PC-9 (cell line): ENCODE measurements at regions of chrX and their contacts with region 1.

Region 1: DNA sequence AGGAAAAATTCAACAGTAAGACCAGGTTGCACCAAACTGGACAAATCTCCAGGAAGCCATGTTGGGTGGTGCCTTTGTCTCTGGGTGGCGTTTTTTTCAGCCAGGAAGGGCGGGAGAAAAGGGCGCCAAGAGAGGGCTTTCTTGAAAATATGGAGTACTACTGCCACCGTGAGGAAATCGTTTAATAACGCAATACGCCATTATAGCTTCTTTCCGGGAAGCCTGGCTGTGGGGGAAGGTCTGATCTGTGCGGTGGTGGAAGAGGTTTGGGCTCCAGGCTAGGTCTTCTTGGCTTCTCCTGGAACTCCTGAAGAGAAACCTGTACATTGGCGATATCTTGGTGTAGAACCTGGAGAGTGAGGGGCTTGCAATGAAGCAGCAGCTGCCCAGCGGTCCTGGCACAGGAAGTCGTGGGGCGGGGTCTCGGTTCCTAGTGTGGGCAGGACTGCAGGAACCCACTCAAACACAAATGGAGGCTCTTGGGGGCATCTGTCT is 202.6 kb downstream of the OR13H1 start:
- DNase-seq: peak in 1 of 2 experiments; percentile 67
- H3K4me3 ChIP-seq: no peak overlapping the region
- H3K27ac ChIP-seq: no peak overlapping the region
- H3K4me1 ChIP-seq: no peaks in the 10 kb centered on the region
- H3K27me3 ChIP-seq: no peaks in the 10 kb centered on the region
- CTCF ChIP-seq: no peak

Region 2: GRCh38 chrX:131493113-131493512 is 253.4 kb before region 1 on chrX:
- CTCF ChIA-PET with region 1: no interaction called
- POLR2A ChIA-PET with region 1: no interaction called
- intact Hi-C with region 1: no loop called
- DNase-seq: no peak
- H3K4me3 ChIP-seq: no peak overlapping the region
- H3K27ac ChIP-seq: no peak overlapping the region
- H3K4me1 ChIP-seq: no peaks in the 10 kb centered on the region
- H3K27me3 ChIP-seq: no peaks in the 10 kb centered on the region
- CTCF ChIP-seq: no peak

Region 3: GRCh38 chrX:131704136-131704695 is 42.3 kb before region 1 on chrX:
- CTCF ChIA-PET with region 1: no interaction called
- POLR2A ChIA-PET with region 1: no interaction called
- intact Hi-C with region 1: loop called (anchors 1 kb)
- DNase-seq: peak; percentile 36 to 72
- H3K4me3 ChIP-seq: peak overlapping the region; percentile 31; the same call in 1 of the 2 replicates
- H3K27ac ChIP-seq: no peak overlapping the region
- H3K4me1 ChIP-seq: no peaks in the 10 kb centered on the region
- H3K27me3 ChIP-seq: no peaks in the 10 kb centered on the region
- CTCF ChIP-seq: peak; percentile 28; the same call in 1 of the 2 replicates

Region 4: GRCh38 chrX:131812836-131813825 is 66.6 kb after region 1 on chrX:
- CTCF ChIA-PET with region 1: no interaction called
- POLR2A ChIA-PET with region 1: no interaction called
- intact Hi-C with region 1: loop called (anchors 1 kb)
- DNase-seq: peak in 1 of 2 experiments; percentile 72
- H3K4me3 ChIP-seq: no peak overlapping the region
- H3K27ac ChIP-seq: no peak overlapping the region
- H3K4me1 ChIP-seq: no peaks in the 10 kb centered on the region
- H3K27me3 ChIP-seq: no peaks in the 10 kb centered on the region
- CTCF ChIP-seq: no peak